ENCODE measurements at regions of chr12 and their contacts with region 1.

Region 1: DNA sequence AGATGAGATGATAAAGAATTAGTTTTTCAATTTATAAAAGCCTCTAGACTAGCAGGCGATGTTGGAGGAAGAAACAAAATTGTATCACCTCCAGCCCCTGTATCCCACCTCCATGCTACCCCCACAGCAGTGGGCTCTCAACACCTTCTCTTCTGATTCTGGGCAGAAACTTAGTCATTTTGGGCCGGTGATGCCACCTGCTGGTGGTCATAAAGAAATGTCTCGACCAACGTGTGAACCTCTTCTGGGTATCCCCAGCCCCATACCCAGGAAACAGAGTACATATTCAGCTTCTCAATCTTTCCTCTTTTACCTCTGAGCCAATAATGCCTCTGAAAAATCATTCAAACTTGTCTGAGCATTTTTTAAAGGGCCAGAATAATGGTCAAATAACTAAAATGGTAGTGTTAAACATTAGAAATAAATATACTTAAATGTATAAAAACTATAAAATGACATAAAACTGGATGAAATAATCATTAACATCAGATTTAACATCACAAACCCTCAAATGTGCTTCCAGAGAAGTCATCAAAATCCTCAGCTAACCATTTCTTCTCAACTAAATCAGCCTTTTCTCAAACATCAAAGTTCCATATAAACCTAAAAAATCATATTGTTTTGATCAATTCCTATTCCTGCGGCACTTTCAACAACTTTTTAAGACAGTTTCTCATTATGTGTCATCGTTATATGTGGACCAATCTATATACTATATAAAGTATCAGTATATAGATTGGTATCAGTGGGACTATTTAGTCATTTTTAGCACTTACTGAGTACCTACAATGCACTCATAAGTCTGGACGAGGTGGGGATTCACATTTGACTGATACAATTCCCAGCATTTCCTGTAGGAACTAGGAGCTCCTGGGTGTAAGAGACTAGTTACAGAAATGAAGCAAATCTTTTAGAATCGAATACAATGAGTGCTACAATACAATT is 69.4 kb downstream of the ATXN2 start:
- DNase-seq: peak; percentile 77
- H3K4me3 Mint-ChIP-seq: no peak overlapping the region
- H3K27ac Mint-ChIP-seq: no peak overlapping the region
- H3K4me1 Mint-ChIP-seq: peaks cover 11% of the 10 kb centered on the region
- H3K27me3 Mint-ChIP-seq: no peaks in the 10 kb centered on the region

Region 2: GRCh38 chr12:111330800-111331752 is 198.6 kb before region 1 on chr12:
- CTCF ChIA-PET with region 1: interaction called, 3 read pairs
- intact Hi-C with region 1: loop called (anchors 1 kb)
- DNase-seq: no peak
- H3K4me3 Mint-ChIP-seq: no peak overlapping the region
- H3K27ac Mint-ChIP-seq: no peak overlapping the region
- H3K4me1 Mint-ChIP-seq: peaks cover 3% of the 10 kb centered on the region
- H3K27me3 Mint-ChIP-seq: no peaks in the 10 kb centered on the region

Region 3: DNA sequence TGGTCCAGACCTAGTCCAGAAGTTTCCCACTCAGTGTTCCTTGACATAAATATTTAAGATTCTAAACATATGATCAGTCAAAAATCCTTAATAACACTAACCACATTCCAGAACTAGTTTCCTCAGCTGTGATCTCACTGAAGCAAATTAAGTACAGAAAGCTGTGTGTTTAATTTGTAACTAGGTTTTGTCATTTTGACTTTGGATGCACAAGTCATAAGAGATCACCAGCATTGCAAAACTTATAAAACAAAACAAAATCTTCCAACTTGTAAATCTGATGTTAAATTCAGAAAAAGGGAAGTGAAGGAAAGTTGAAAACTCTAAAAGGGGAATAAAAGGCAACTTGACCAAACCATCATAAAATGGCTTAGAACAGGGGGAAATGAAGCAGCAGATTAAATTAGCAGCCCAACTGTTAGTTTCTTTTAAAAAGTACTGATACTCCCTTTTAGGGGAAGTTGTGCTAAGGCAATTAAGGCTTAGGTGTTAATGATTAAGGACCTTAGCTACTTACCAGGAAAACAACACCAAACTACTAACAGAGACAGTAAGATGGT is 67.4 kb before region 1 on chr12:
- CTCF ChIA-PET with region 1: no interaction called
- intact Hi-C with region 1: loop called (anchors 5 kb)
- DNase-seq: no peak
- H3K4me3 Mint-ChIP-seq: no peak overlapping the region
- H3K27ac Mint-ChIP-seq: no peak overlapping the region
- H3K4me1 Mint-ChIP-seq: peaks cover 1% of the 10 kb centered on the region
- H3K27me3 Mint-ChIP-seq: no peaks in the 10 kb centered on the region

Region 4: GRCh38 chr12:111599459-111600204 is 69.9 kb after region 1 on chr12:
- CTCF ChIA-PET with region 1: no interaction called
- intact Hi-C with region 1: no loop called
- DNase-seq: peak; percentile 83
- H3K4me3 Mint-ChIP-seq: peak overlapping the region; percentile 83
- H3K27ac Mint-ChIP-seq: peak overlapping the region; percentile 85
- H3K4me1 Mint-ChIP-seq: peaks cover 25% of the 10 kb centered on the region
- H3K27me3 Mint-ChIP-seq: no peaks in the 10 kb centered on the region

Region 5: GRCh38 chr12:111685744-111686517 is 156.2 kb after region 1 on chr12 and contains the starts of genes ACAD10 and BRAP:
- CTCF ChIA-PET with region 1: interaction called, 4 read pairs
- intact Hi-C with region 1: loop called (anchors 10 kb)
- DNase-seq: peak; percentile 94
- H3K4me3 Mint-ChIP-seq: peak within 1 kb of the TSS; percentile 91
- H3K27ac Mint-ChIP-seq: peak within 1 kb of the TSS; percentile 86
- H3K4me1 Mint-ChIP-seq: peaks cover 33% of the 10 kb centered on the region
- H3K27me3 Mint-ChIP-seq: no peaks in the 10 kb centered on the region
- total RNA-seq, gene ACAD10: 19.0 to 21.7 TPM
- total RNA-seq, gene BRAP: 14.7 to 16.9 TPM